ENCODE measurements at regions of chr15 and their contacts with region 1.

Region 1: DNA sequence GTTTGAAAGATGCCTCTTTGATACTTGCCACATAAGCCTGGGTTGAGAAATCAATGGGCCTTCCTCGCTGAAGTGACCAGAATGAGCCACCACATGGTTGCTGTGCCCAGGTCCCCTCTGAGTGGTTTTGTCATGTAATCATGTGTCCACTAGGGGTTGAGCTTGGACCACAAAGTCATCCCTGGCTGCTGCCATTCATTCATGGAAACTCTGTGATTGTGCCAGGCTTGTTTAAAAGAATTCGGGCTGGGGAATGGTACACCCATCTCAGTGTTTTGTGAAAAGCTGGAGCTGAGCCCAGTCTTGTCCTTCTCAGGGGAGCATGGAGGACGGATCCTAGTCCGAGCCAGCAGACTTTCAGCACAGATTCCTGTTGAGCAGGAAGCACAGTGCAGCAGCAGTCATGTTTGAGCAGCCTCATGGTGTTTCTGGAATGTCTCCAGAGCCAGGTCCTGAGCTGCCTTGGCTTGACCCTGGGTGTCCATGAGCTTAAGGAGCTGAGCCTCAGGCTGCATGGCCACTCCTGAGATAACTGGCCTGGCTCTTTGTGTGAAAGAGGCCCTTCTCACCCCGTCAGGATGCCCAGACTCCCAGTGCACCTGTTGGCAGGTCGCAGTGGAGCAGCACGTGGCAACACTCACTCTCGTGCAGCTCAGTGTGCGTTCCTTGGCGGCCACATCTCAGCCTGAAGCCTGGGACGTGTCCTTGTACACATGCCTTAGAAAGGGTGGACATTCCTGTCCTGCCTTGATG is 260.3 kb upstream of the TPM1 start:
- DNase-seq: peak; percentile 48 to 55 (median 50)
- ATAC-seq: peak; percentile 92
- H3K4me3 ChIP-seq: no peak overlapping the region
- H3K27ac ChIP-seq: no peak overlapping the region
- H3K4me1 ChIP-seq: no peaks in the 10 kb centered on the region
- H3K27me3 ChIP-seq: peaks cover 0 to 23% of the 10 kb centered on the region in 2 experiments; a peak in 4 of 5 replicates
- CTCF ChIP-seq: peak; percentile 59 to 74 (median 67)
- EP300 ChIP-seq: no peak
- POLR2A ChIP-seq: no peak
- RAD21 ChIP-seq: peak; percentile 64 to 80

Region 2: GRCh38 chr15:63093486-63094205 is 311.4 kb after region 1 on chr15:
- CTCF ChIA-PET with region 1: interaction called, 11 read pairs
- POLR2A ChIA-PET with region 1: no interaction called
- in situ Hi-C with region 1: no loop called
- intact Hi-C with region 1: loop called (anchors 1 kb)
- DNase-seq: peak; percentile 74 to 87 (median 78)
- ATAC-seq: peak; percentile 99
- H3K4me3 ChIP-seq: no peak overlapping the region
- H3K27ac ChIP-seq: no peak overlapping the region
- H3K4me1 ChIP-seq: peaks cover 2 to 5% of the 10 kb centered on the region in 2 experiments; a peak in 1 of 5 replicates
- H3K27me3 ChIP-seq: 0 out of 5 replicates have a peak, but pooled peaks cover 0 to 3% of the 10 kb centered on the region in 2 experiments
- CTCF ChIP-seq: peak; percentile 92 to 95 (median 92)
- EP300 ChIP-seq: no peak
- POLR2A ChIP-seq: no peak
- RAD21 ChIP-seq: peak; percentile 98 to 100

Measured in K562 (cell line).